A549 (cell line): ENCODE measurements at regions of chr6 and their contacts with region 1.

Region 1: DNA sequence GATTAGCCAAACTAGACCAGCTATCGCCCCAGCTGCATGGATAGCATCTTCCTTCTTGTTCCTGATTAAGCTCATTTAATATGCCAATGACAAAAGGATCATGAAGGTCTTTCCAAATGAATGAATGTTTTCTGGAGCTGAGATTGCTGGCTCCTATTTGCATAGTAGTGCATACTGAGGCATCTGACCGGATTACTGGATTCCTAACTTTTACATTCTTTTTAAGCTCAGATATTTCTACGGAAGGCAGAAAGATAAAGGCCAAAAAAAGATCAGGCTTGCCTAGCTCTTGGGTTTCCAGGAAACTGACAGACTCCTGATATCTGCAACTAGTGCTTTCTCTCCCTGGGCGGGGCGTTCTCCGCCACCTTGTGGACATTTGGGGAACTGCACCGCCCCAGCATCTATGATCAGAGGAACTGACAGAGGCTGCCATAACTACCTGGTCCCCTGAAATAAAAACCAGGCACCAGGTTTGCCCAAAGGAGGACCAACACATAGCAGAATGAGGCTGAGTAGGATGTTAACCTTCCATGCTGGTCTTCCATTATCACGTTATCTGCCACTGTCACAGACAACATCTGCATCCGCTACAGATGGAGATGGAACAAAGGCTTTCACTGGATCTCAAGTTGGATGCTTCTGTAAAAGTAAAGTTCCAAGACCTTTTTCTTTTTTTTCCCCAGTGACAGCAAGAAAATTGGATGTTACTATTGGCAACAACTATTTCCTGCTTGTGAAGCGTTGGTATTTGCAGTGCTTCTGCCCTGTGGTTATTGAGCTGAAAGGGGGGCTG is 33.2 kb downstream of the NT5E start:
- DNase-seq: peak; percentile 37 to 55
- ATAC-seq: peak; percentile 94 to 98
- H3K4me3 ChIP-seq: no peak overlapping the region
- H3K27ac ChIP-seq: peak overlapping the region in 1 of 2 experiments; percentile 33; a peak in 3 of 6 replicates
- H3K4me1 ChIP-seq: peaks cover 6% of the 10 kb centered on the region; the same call in 1 of the 3 replicates
- CTCF ChIP-seq: peak; percentile 82
- EP300 ChIP-seq: no peak
- POLR2A ChIP-seq: no peak
- RAD21 ChIP-seq: peak; percentile 86 to 89

Region 2: GRCh38 chr6:85354761-85355618 is 128.1 kb before region 1 on chr6:
- CTCF ChIA-PET with region 1: interaction called, 161 read pairs
- POLR2A ChIA-PET with region 1: no interaction called
- DNase-seq: peak; percentile 33 to 59
- ATAC-seq: peak; percentile 91 to 95
- H3K4me3 ChIP-seq: no peak overlapping the region
- H3K27ac ChIP-seq: peak overlapping the region; percentile 41 to 67; a peak in 5 of 6 replicates
- H3K4me1 ChIP-seq: peaks cover 15% of the 10 kb centered on the region
- CTCF ChIP-seq: peak; percentile 88
- EP300 ChIP-seq: no peak
- POLR2A ChIP-seq: no peak
- RAD21 ChIP-seq: peak; percentile 92 to 97

Region 3: DNA sequence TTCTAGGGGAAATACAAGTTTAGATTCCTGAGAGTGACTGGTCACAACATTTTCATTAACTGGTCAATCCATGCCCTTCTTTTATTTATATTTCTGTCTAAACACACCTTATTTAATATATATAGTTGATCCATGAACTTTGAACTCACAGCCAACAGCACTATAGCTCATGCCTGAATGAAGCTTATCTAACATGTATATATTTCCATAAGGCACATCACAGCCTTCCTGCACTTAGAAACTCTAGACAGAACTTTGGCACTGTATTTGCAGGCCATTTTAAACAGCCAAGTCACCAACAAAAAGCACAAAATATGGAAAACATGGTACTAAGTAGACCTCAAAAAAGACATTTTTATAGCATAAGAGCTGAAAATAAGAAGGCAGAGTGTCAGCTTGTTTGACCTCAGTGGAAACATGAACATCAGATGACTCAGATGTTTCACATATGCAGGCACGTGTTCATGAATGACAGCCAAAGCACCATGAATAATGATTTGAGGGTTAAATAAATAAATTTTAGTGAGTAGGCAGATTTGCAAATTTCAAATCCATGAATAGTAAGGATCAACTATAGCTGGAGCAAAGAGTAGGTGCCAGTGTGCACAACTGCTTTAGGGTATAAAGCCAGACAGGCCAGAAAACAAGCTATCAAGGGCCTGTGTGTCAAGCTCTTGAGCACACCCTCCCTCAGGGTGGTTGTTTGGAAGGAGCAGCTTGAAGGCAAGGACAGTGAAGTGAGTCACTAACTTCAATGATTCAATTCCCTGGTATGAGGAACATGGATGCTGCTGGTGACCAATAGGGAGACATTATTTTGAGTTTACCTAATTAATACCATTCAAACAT is 122.1 kb before region 1 on chr6:
- CTCF ChIA-PET with region 1: interaction called, 161 read pairs
- POLR2A ChIA-PET with region 1: no interaction called
- DNase-seq: peak; percentile 53 to 88
- ATAC-seq: peak; percentile 98 to 99
- H3K4me3 ChIP-seq: no peak overlapping the region
- H3K27ac ChIP-seq: peak overlapping the region; percentile 75 to 81
- H3K4me1 ChIP-seq: peaks cover 44% of the 10 kb centered on the region
- CTCF ChIP-seq: no peak
- EP300 ChIP-seq: no peak
- POLR2A ChIP-seq: no peak
- RAD21 ChIP-seq: peak in 1 of 2 experiments; percentile 5; a peak in 2 of 5 replicates

Region 4: GRCh38 chr6:85404502-85405174 is 78.5 kb before region 1 on chr6:
- CTCF ChIA-PET with region 1: interaction called, 21 read pairs
- POLR2A ChIA-PET with region 1: interaction called, 5 read pairs
- DNase-seq: peak; percentile 65 to 90
- ATAC-seq: peak; percentile 85 to 88
- H3K4me3 ChIP-seq: peak overlapping the region; percentile 36
- H3K27ac ChIP-seq: peak overlapping the region; percentile 93 to 94
- H3K4me1 ChIP-seq: peaks cover 58% of the 10 kb centered on the region
- CTCF ChIP-seq: no peak
- EP300 ChIP-seq: 0 out of 5 replicates have a peak, but pooled peaks of 1 of the 2 experiments have one; percentile 33
- POLR2A ChIP-seq: no peak
- RAD21 ChIP-seq: 0 out of 5 replicates have a peak, but pooled peaks of 1 of the 2 experiments have one; percentile 7

Region 5: GRCh38 chr6:85460921-85461797 is 21.9 kb before region 1 on chr6:
- CTCF ChIA-PET with region 1: interaction called, 14 read pairs
- POLR2A ChIA-PET with region 1: no interaction called
- DNase-seq: no peak
- ATAC-seq: no peak
- H3K4me3 ChIP-seq: no peak overlapping the region
- H3K27ac ChIP-seq: peak overlapping the region in 1 of 2 experiments; percentile 85; a peak in 3 of 6 replicates
- H3K4me1 ChIP-seq: peaks cover 84% of the 10 kb centered on the region
- CTCF ChIP-seq: no peak
- EP300 ChIP-seq: no peak
- POLR2A ChIP-seq: no peak
- RAD21 ChIP-seq: no peak

Region 6: GRCh38 chr6:85468261-85468660 is 14.8 kb before region 1 on chr6:
- CTCF ChIA-PET with region 1: interaction called, 26 read pairs
- POLR2A ChIA-PET with region 1: no interaction called
- DNase-seq: no peak
- ATAC-seq: no peak
- H3K4me3 ChIP-seq: no peak overlapping the region
- H3K27ac ChIP-seq: peak overlapping the region in 1 of 2 experiments; percentile 48; a peak in 2 of 6 replicates
- H3K4me1 ChIP-seq: peaks cover 34% of the 10 kb centered on the region
- CTCF ChIP-seq: no peak
- EP300 ChIP-seq: no peak
- POLR2A ChIP-seq: no peak
- RAD21 ChIP-seq: no peak